ENCODE measurements at regions of chr5 and their contacts with region 1.

Region 1: DNA sequence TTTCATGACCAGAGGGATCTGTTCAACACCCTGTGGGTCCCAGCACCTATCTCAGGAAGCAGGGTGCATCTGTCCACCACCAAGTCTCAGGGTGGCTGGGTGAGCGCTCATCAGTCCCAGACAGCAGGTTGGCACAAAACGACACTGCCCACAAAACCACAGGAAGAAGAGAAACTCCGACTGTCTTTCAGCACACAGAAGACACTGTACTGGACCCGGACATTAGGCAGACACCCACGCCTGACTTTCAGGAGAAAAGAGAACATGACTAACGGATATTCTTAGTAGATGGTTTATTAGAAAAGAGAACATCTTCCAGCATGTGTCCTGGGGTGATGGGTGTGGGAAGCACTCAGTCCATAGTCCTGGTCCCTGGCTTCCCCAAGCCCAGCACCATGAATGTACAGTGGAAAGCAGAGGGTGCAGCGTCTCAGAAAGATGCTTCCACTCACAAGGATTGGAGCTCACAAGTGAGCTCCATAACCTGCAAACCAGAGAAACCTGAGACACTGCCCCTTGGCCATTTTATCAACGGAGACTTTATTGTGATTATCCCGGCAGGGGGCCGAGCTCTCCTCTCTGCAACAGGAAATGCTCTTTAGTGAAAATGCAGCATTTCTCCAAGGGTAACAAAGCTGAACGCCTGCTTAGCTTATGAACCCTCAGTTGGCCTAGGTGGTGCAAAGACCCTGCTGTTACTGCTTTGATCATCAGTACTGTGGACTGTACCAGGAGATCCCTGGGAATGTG is 35.8 kb upstream of the LCP2 start:
- DNase-seq: peak in 1 of 2 donors; percentile 38
- H3K4me3 ChIP-seq: no peak overlapping the region
- H3K27ac ChIP-seq: peak overlapping the region; percentile 25 to 84
- H3K4me1 ChIP-seq: no peaks in the 10 kb centered on the region
- H3K27me3 ChIP-seq: no peaks in the 10 kb centered on the region
- CTCF ChIP-seq: no peak
- POLR2A ChIP-seq: no peak

Region 2: GRCh38 chr5:169788166-169788565 is 545.2 kb before region 1 on chr5:
- intact Hi-C with region 1: loop called (anchors 5 kb)
- DNase-seq: no peak
- H3K4me3 ChIP-seq: no peak overlapping the region
- H3K27ac ChIP-seq: no peak overlapping the region
- H3K4me1 ChIP-seq: no peaks in the 10 kb centered on the region
- H3K27me3 ChIP-seq: no peaks in the 10 kb centered on the region
- CTCF ChIP-seq: no peak
- POLR2A ChIP-seq: no peak

Region 3: GRCh38 chr5:169923988-169924387 is 409.3 kb before region 1 on chr5:
- intact Hi-C with region 1: no loop called
- DNase-seq: no peak
- H3K4me3 ChIP-seq: no peak overlapping the region
- H3K27ac ChIP-seq: no peak overlapping the region
- H3K4me1 ChIP-seq: no peaks in the 10 kb centered on the region
- H3K27me3 ChIP-seq: no peaks in the 10 kb centered on the region
- CTCF ChIP-seq: no peak
- POLR2A ChIP-seq: no peak

Region 4: DNA sequence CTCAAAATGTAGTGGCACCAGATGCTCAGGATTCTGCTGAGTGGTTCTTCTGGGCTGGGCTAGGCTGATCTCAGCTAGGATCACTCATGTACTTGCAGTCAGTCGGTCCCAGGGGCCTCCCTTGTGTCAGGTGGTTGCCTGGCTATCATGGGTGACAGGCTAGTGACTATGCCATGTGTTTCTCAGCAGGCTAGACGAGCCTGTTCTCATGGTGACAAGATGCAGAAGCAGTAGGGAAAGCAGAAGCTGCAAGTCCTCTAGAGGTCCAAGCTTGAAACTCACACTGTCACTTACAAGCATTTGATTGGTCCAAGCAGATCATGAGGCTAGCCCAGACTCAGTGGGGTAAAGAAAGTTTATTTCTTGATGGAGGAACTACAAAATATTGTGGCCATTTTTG is 71.1 kb after region 1 on chr5:
- intact Hi-C with region 1: no loop called
- DNase-seq: no peak
- H3K4me3 ChIP-seq: no peak overlapping the region
- H3K27ac ChIP-seq: no peak overlapping the region
- H3K4me1 ChIP-seq: no peaks in the 10 kb centered on the region
- H3K27me3 ChIP-seq: no peaks in the 10 kb centered on the region
- CTCF ChIP-seq: no peak
- POLR2A ChIP-seq: no peak

Region 5: GRCh38 chr5:171127314-171127713 is 794.0 kb after region 1 on chr5:
- intact Hi-C with region 1: no loop called
- DNase-seq: no peak
- H3K4me3 ChIP-seq: no peak overlapping the region
- H3K27ac ChIP-seq: no peak overlapping the region
- H3K4me1 ChIP-seq: no peaks in the 10 kb centered on the region
- H3K27me3 ChIP-seq: no peaks in the 10 kb centered on the region
- CTCF ChIP-seq: no peak
- POLR2A ChIP-seq: no peak

Measured in breast epithelium (tissue), 4 donors.